Activated CD4-positive, alpha-beta memory T cell treated with anti-CD3 and anti-CD28 coated beads for 36 hours (primary cell): ENCODE measurements at regions of chr10 and their contacts with region 1.

Region 1: GRCh38 chr10:98858525-98858924 is 377.1 kb downstream of the HPSE2 start:
- DNase-seq: no peak
- H3K4me3 Mint-ChIP-seq: no peak overlapping the region
- H3K27ac Mint-ChIP-seq: no peak overlapping the region
- H3K4me1 Mint-ChIP-seq: no peaks in the 10 kb centered on the region
- H3K27me3 Mint-ChIP-seq: peaks cover 2% of the 10 kb centered on the region

Region 2: GRCh38 chr10:98916526-98917120 is 58.1 kb after region 1 on chr10:
- CTCF ChIA-PET with region 1: no interaction called
- POLR2A ChIA-PET with region 1: no interaction called
- intact Hi-C with region 1: loop called (anchors 2 kb)
- DNase-seq: no peak
- H3K4me3 Mint-ChIP-seq: no peak overlapping the region
- H3K27ac Mint-ChIP-seq: no peak overlapping the region
- H3K4me1 Mint-ChIP-seq: no peaks in the 10 kb centered on the region
- H3K27me3 Mint-ChIP-seq: no peaks in the 10 kb centered on the region

Region 3: GRCh38 chr10:99161165-99161564 is 302.6 kb after region 1 on chr10:
- CTCF ChIA-PET with region 1: no interaction called
- POLR2A ChIA-PET with region 1: no interaction called
- intact Hi-C with region 1: no loop called
- DNase-seq: no peak
- H3K4me3 Mint-ChIP-seq: no peak overlapping the region
- H3K27ac Mint-ChIP-seq: no peak overlapping the region
- H3K4me1 Mint-ChIP-seq: no peaks in the 10 kb centered on the region
- H3K27me3 Mint-ChIP-seq: no peaks in the 10 kb centered on the region